Activated CD4-positive, alpha-beta T cell treated with anti-CD3 and anti-CD28 coated beads for 36 hours (primary cell): ENCODE measurements at regions of chr1 and their contacts with region 1.

Region 1: DNA sequence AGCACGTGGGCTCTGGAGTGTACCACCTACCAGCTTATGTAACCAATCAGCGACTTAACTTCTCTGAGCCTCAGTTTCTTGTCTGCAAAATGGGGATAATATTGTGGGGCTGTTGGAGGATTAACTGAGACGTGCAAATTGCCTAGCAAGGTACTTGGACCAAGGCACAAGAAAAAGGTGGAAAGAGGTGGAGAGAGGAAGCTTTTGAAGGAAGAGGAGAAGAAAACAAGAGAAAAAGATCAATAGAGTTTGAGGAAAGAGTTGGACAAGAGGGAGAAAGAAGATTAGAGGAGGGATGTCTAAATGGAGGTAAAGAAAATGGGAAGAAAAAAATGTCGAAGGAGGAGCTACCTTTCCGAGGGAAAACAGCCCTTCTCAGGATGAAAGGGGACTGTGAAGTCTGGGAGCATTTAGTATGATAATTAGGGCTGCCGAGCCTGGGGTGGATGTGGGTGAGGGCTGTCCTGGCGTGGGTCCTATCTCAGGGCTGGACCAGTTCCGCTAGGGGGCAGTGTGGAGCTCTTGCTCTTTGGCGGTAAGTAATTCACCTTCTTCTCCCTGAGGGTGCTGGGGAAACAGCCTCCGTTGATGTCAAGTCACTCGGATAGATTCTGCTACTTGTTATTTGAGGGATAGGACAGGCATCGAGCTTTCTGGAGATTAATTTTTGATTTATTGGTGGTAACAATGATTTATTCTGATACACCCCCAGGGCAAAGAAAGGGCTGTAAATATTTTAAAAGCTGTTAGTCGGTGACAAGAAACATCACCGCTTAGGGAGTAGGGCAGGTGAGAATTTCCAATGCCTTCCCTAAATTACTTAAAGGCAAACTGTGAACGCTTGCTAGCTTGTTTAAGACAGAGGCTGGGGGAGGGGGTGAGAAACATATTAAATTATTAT is 79.0 kb upstream of the NFASC start:
- DNase-seq: peak; percentile 93
- ATAC-seq: peak; percentile 96
- H3K4me3 Mint-ChIP-seq: no peak overlapping the region
- H3K27ac Mint-ChIP-seq: no peak overlapping the region
- H3K4me1 Mint-ChIP-seq: peaks cover 2% of the 10 kb centered on the region
- H3K27me3 Mint-ChIP-seq: peaks cover 21% of the 10 kb centered on the region

Region 2: GRCh38 chr1:204730826-204731459 is 60.8 kb before region 1 on chr1:
- CTCF ChIA-PET with region 1: no interaction called
- POLR2A ChIA-PET with region 1: no interaction called
- intact Hi-C with region 1: no loop called
- DNase-seq: no peak
- ATAC-seq: no peak
- H3K4me3 Mint-ChIP-seq: no peak overlapping the region
- H3K27ac Mint-ChIP-seq: no peak overlapping the region
- H3K4me1 Mint-ChIP-seq: peaks cover 3% of the 10 kb centered on the region
- H3K27me3 Mint-ChIP-seq: no peaks in the 10 kb centered on the region

Region 3: DNA sequence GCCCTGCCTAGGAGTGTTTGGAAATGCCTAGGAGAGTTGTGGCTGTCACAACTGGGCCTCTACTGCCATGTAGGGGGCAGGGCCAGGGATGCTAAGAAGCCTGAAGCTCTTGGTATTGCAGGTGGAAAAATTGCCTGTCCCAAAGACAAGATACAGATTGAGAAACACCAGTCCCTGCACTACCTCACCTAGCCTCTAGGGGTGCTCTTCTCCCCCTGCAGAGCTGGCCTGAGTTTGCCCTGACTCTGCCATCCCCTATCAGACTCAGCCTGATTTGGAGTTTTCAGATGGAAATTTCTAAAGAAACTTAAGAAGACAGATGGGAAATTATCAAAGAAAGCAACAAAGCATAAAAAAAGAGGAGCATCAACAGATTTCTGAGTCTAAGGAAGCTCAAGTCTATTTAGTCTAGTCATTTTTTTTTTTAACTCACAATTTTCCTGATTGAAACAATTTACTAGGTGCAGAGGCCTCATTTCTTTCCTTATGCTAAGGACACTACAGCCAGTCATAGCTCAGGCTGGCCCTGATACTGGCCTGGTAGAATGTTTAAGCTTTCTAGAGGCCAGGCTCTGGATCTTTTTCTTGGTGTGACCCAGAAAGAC is 44.8 kb before region 1 on chr1:
- CTCF ChIA-PET with region 1: interaction called, 14 read pairs
- POLR2A ChIA-PET with region 1: no interaction called
- intact Hi-C with region 1: no loop called
- DNase-seq: peak; percentile 70
- ATAC-seq: peak; percentile 85
- H3K4me3 Mint-ChIP-seq: no peak overlapping the region
- H3K27ac Mint-ChIP-seq: no peak overlapping the region
- H3K4me1 Mint-ChIP-seq: no peaks in the 10 kb centered on the region
- H3K27me3 Mint-ChIP-seq: peaks cover 6% of the 10 kb centered on the region

Region 4: GRCh38 chr1:204879351-204879750 is 87.6 kb after region 1 on chr1:
- CTCF ChIA-PET with region 1: no interaction called
- POLR2A ChIA-PET with region 1: no interaction called
- intact Hi-C with region 1: no loop called
- DNase-seq: no peak
- ATAC-seq: no peak
- H3K4me3 Mint-ChIP-seq: no peak overlapping the region
- H3K27ac Mint-ChIP-seq: no peak overlapping the region
- H3K4me1 Mint-ChIP-seq: no peaks in the 10 kb centered on the region
- H3K27me3 Mint-ChIP-seq: peaks cover 15% of the 10 kb centered on the region

Region 5: DNA sequence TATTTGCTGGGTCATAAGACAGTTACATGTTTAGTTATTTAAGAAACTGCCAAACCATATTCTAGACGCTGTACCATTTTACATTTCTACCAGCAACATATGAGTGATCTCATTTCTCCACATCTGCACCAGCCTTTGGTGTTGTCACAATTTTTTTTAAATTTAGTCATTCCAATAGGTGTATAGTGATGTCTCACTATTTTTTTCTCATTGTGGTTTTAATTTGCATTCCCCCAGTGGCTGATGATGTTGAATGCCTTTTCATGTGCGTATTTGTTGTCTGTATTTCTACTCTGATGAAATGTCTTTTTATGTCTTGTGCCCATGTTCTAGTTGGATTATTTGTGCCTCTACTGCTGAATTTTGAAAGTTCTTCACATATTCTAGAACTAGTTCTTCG is 117.4 kb after region 1 on chr1:
- CTCF ChIA-PET with region 1: no interaction called
- POLR2A ChIA-PET with region 1: no interaction called
- intact Hi-C with region 1: no loop called
- DNase-seq: no peak
- ATAC-seq: peak; percentile 66
- H3K4me3 Mint-ChIP-seq: no peak overlapping the region
- H3K27ac Mint-ChIP-seq: no peak overlapping the region
- H3K4me1 Mint-ChIP-seq: peaks cover 2% of the 10 kb centered on the region
- H3K27me3 Mint-ChIP-seq: peaks cover 19% of the 10 kb centered on the region

Region 6: DNA sequence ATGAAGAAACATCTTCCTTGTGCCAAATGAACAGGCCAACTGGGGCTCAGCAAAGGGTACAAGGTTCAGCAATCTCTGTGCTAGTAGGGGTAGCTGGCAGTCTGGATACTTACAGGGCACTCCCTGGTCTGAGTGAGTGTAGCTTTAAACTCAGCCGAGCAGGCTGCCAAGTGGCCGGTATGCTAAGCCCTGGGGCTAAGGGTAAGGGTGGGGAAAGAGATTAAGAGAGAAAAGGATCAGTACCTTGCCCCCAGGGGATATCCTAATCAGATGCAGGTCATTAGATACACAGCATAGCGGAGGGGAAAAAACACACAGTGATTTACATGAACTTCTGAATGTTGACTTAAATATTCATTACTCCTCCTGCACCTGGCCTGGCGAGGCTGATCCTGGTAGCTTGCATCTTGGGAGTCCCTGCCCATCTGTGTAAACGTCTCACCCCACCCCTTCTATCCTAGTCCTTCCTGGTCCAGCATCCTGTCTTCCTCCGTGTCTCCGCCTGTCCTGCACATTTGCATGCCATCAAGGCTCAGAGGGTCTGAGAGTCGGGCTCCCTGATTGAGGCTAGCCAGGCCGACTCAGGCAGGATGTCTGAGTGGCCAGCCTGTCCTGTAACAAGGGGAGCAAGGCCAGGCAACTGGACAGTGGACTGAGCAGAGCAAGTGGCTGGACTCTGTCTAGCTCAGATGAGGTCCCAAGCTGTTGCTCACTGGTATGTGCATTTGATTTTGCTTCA is 211.9 kb after region 1 on chr1:
- CTCF ChIA-PET with region 1: no interaction called
- POLR2A ChIA-PET with region 1: no interaction called
- intact Hi-C with region 1: no loop called
- DNase-seq: no peak
- ATAC-seq: no peak
- H3K4me3 Mint-ChIP-seq: no peak overlapping the region
- H3K27ac Mint-ChIP-seq: no peak overlapping the region
- H3K4me1 Mint-ChIP-seq: no peaks in the 10 kb centered on the region
- H3K27me3 Mint-ChIP-seq: no peaks in the 10 kb centered on the region